A673 (cell line): ENCODE measurements at regions of chr9 and their contacts with region 1.

Region 1: GRCh38 chr9:122931226-122932121 is at the start of gene ZBTB26:
- DNase-seq: peak; percentile 97
- H3K4me3 ChIP-seq: peak within 1 kb of the TSS; percentile 77
- H3K27ac ChIP-seq: peak within 1 kb of the TSS; percentile 88
- H3K4me1 ChIP-seq: peaks cover 7% of the 10 kb centered on the region
- H3K27me3 ChIP-seq: no peaks in the 10 kb centered on the region
- CTCF ChIP-seq: no peak
- total RNA-seq, gene ZBTB26: 10.1 and 10.9 TPM in 2 replicates

Region 2: DNA sequence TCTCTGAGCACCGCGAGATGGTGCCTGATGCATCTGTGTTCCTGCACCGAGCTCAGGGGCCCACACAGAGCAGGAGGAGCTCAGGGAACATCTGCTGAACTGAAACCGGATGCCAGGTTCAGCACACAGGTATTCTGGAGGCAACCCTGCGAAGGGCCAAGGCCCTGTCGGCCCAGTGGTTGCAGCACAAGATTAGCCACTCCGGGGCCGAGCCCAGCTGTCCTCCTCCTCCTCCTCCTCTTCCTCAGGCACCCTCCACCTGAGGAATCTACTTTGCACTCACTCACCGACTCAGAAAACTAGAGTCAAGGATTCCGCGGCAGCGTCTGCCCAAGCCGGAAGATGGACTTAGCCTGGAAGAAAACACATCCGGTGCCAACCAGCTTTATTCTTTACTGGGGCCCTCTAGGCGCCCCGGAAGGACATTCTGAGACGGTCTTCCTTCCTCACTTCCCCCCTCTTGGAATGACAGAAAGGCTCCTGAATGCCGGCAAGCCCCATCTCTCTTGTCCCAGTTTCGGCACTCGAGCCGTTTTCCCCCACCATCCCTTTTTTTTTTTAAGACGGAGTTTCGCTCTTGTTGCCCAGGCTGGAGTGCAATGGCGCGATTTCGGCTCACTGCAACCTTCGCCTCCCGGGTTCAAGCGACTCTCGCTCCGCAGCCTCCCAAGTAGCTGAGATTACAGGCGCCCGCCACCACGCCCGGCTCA is 18.4 kb before region 1 on chr9 and contains the start of gene ZBTB6:
- CTCF ChIA-PET with region 1: no interaction called
- POLR2A ChIA-PET with region 1: interaction called, 3 read pairs
- intact Hi-C with region 1: loop called (anchors 2 kb)
- DNase-seq: peak; percentile 93
- H3K4me3 ChIP-seq: peak within 1 kb of the TSS; percentile 82
- H3K27ac ChIP-seq: peak within 1 kb of the TSS; percentile 87
- H3K4me1 ChIP-seq: peaks cover 8% of the 10 kb centered on the region
- H3K27me3 ChIP-seq: no peaks in the 10 kb centered on the region
- CTCF ChIP-seq: no peak
- total RNA-seq, gene ZBTB6: 10.4 and 10.5 TPM in 2 replicates